ENCODE measurements at regions of chr13 and their contacts with region 1.

Region 1: DNA sequence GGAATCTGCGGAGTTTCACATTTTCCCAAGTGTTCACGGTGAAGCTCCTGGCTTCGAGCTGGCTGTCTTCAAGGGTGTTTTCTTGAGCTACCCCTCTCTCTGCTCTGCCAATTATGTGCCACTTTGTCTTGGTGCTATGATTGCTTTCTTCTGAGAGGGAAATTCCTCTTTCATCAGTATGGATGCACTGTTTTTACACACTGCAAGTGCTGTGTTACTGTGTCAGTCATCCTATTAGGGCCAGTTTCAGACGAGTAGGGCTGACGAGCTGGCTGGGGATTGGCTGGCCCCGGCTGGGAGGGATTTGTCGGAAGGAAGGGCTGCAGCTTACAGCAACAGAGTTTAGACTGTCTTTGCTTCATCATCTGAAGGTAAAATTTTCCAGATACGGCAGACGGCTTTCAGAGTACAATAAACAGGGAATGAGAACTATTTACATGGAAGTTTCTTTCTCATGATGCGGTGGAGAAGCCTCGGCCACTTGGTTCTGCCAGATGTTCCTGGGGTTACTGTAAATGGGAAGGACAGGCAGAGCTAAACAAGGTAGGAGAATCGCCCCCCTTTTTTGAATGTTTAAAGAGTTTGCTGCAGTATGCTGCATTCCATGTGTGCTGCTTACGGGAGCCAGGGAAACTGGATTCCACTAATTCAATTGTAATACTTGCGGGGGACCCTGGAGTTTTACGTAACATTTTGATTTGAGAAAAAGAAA is at the start of gene MBNL2:
- DNase-seq: peak; percentile 91
- ATAC-seq: peak; percentile 94
- H3K4me3 Mint-ChIP-seq: peak within 1 kb of the TSS; percentile 83
- H3K27ac Mint-ChIP-seq: peak within 1 kb of the TSS; percentile 81
- H3K4me1 Mint-ChIP-seq: peaks cover 45% of the 10 kb centered on the region
- H3K27me3 Mint-ChIP-seq: no peaks in the 10 kb centered on the region
- total RNA-seq, gene MBNL2: 11.6 to 12.3 TPM

Region 2: GRCh38 chr13:97344265-97345175 is 122.4 kb after region 1 on chr13:
- CTCF ChIA-PET with region 1: interaction called, 11 read pairs
- POLR2A ChIA-PET with region 1: no interaction called
- DNase-seq: peak; percentile 61
- ATAC-seq: peak; percentile 67
- H3K4me3 Mint-ChIP-seq: no peak overlapping the region
- H3K27ac Mint-ChIP-seq: no peak overlapping the region
- H3K4me1 Mint-ChIP-seq: no peaks in the 10 kb centered on the region
- H3K27me3 Mint-ChIP-seq: no peaks in the 10 kb centered on the region

Region 3: GRCh38 chr13:97359181-97360057 is 137.3 kb after region 1 on chr13:
- CTCF ChIA-PET with region 1: interaction called, 12 read pairs
- POLR2A ChIA-PET with region 1: no interaction called
- DNase-seq: peak; percentile 64
- ATAC-seq: peak; percentile 88
- H3K4me3 Mint-ChIP-seq: no peak overlapping the region
- H3K27ac Mint-ChIP-seq: no peak overlapping the region
- H3K4me1 Mint-ChIP-seq: no peaks in the 10 kb centered on the region
- H3K27me3 Mint-ChIP-seq: no peaks in the 10 kb centered on the region

Region 4: GRCh38 chr13:97432917-97433726 is 211.0 kb after region 1 on chr13:
- CTCF ChIA-PET with region 1: no interaction called
- POLR2A ChIA-PET with region 1: interaction called, 39 read pairs
- DNase-seq: peak; percentile 98
- ATAC-seq: peak; percentile 86
- H3K4me3 Mint-ChIP-seq: peak overlapping the region; percentile 89
- H3K27ac Mint-ChIP-seq: peak overlapping the region; percentile 98
- H3K4me1 Mint-ChIP-seq: peaks cover 29% of the 10 kb centered on the region
- H3K27me3 Mint-ChIP-seq: peaks cover 2% of the 10 kb centered on the region

Measured in activated CD8-positive, alpha-beta T cell treated with anti-CD3 and anti-CD28 coated beads, Interleukin-2, amount 10 ng/mL, durations not matched to agents 7 days and 5 days (primary cell).